MCF 10A (cell line): ENCODE measurements at regions of chr1 and their contacts with region 1.

Region 1: GRCh38 chr1:50368179-50369012 is 54.8 kb downstream of the DMRTA2 start:
- DNase-seq: peak; percentile 52
- H3K4me3 Mint-ChIP-seq: no peak overlapping the region
- H3K27ac Mint-ChIP-seq: no peak overlapping the region
- H3K4me1 Mint-ChIP-seq: no peaks in the 10 kb centered on the region
- H3K27me3 Mint-ChIP-seq: peaks cover 64% of the 10 kb centered on the region
- CTCF ChIP-seq: peak; percentile 97

Region 2: DNA sequence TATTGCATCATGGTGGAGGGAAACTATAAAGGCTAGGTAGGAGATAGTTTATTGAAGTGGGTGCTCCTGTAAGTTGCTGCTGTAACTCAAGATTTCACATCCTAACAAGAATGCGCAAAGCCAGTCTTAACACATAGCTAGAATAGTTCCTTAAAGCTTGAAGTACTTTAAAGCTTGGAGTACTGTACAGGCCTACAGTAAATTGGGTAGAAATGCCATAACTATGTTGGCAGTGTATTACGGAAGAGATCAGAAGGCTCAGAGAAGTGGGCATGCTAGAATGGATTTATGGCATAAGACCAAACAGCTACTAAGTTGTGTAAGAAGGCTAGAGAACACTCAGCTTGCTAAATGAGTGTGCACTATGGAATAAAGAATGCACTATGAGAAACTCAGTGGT is 10.4 kb after region 1 on chr1:
- CTCF ChIA-PET with region 1: interaction called, 14 read pairs
- POLR2A ChIA-PET with region 1: no interaction called
- intact Hi-C with region 1: no loop called
- DNase-seq: no peak
- H3K4me3 Mint-ChIP-seq: no peak overlapping the region
- H3K27ac Mint-ChIP-seq: no peak overlapping the region
- H3K4me1 Mint-ChIP-seq: no peaks in the 10 kb centered on the region
- H3K27me3 Mint-ChIP-seq: peaks cover 5% of the 10 kb centered on the region
- CTCF ChIP-seq: no peak

Region 3: GRCh38 chr1:50610563-50610962 is 242.2 kb after region 1 on chr1:
- CTCF ChIA-PET with region 1: interaction called, 48 read pairs
- POLR2A ChIA-PET with region 1: no interaction called
- intact Hi-C with region 1: loop called (anchors 1 kb)
- DNase-seq: no peak
- H3K4me3 Mint-ChIP-seq: no peak overlapping the region
- H3K27ac Mint-ChIP-seq: no peak overlapping the region
- H3K4me1 Mint-ChIP-seq: peaks cover 6% of the 10 kb centered on the region
- H3K27me3 Mint-ChIP-seq: no peaks in the 10 kb centered on the region
- CTCF ChIP-seq: no peak

Region 4: DNA sequence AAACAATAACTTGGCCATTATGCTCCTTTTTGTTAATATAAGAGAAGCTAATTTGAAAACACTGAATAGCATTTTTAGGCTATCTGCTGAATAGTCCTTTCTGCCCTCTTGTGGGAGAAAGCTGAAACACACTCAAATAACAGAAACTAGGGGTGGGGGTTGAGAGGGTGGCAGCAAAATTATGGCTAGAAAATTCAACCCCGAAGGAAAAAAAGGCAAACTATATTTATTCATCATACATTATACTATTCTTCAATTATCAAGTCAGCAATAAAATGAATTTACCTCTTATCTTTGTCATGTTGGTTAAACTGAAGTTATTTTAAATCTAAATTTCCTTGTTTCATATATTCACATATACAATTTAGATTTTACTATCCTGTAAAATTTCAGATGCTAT is 335.7 kb after region 1 on chr1:
- CTCF ChIA-PET with region 1: interaction called, 9 read pairs
- POLR2A ChIA-PET with region 1: no interaction called
- intact Hi-C with region 1: loop called (anchors 1 kb)
- DNase-seq: peak; percentile 66
- H3K4me3 Mint-ChIP-seq: no peak overlapping the region
- H3K27ac Mint-ChIP-seq: no peak overlapping the region
- H3K4me1 Mint-ChIP-seq: peaks cover 12% of the 10 kb centered on the region
- H3K27me3 Mint-ChIP-seq: no peaks in the 10 kb centered on the region
- CTCF ChIP-seq: peak; percentile 60

Region 5: GRCh38 chr1:51296383-51297357 is 928.3 kb after region 1 on chr1:
- CTCF ChIA-PET with region 1: no interaction called
- POLR2A ChIA-PET with region 1: no interaction called
- intact Hi-C with region 1: loop called (anchors 10 kb)
- DNase-seq: peak; percentile 83
- H3K4me3 Mint-ChIP-seq: peak overlapping the region; percentile 41
- H3K27ac Mint-ChIP-seq: no peak overlapping the region
- H3K4me1 Mint-ChIP-seq: peaks cover 13% of the 10 kb centered on the region
- H3K27me3 Mint-ChIP-seq: no peaks in the 10 kb centered on the region
- CTCF ChIP-seq: peak; percentile 98